Gastrocnemius medialis (tissue), 4 donors: ENCODE measurements at regions of chr7 and their contacts with region 1.

Region 1: GRCh38 chr7:121012919-121013318 is 24.4 kb downstream of the CPED1 start:
- DNase-seq: no peak
- ATAC-seq: peak; percentile 87 to 91
- H3K4me3 ChIP-seq: peak overlapping the region; percentile 21 to 34 (median 28)
- H3K27ac ChIP-seq: peak overlapping the region; percentile 86 to 98 (median 94)
- H3K4me1 ChIP-seq: peaks cover 76 to 83% of the 10 kb centered on the region in 2 donors
- H3K27me3 ChIP-seq: no peaks in the 10 kb centered on the region
- CTCF ChIP-seq: no peak
- POLR2A ChIP-seq: no peak

Region 2: GRCh38 chr7:121054925-121055324 is 42.0 kb after region 1 on chr7:
- in situ Hi-C with region 1: no loop called
- intact Hi-C with region 1: loop called (anchors 5 kb)
- DNase-seq: no peak
- ATAC-seq: no peak
- H3K4me3 ChIP-seq: no peak overlapping the region
- H3K27ac ChIP-seq: peak overlapping the region; percentile 80 to 86 (median 84)
- H3K4me1 ChIP-seq: peaks cover 64 to 79% of the 10 kb centered on the region in 2 donors
- H3K27me3 ChIP-seq: no peaks in the 10 kb centered on the region
- CTCF ChIP-seq: no peak
- POLR2A ChIP-seq: no peak

Region 3: DNA sequence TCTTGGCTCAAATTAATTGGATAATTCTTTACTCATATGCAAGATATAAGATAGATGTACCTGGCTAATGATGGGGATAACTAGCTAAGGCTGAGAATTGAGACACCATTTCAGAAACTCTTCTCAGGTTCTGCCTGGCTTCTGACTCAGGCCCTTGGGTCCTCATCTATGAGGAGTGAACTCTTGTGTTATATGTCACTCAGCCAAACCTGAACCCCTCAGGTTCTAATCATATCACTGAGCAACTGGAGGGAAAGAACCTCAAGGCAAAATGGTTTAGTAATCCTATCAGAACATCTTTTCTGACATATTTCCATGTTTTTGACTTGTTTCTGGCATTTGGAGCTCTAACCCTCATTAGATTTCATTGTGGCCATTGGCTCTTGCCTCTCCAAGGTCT is 76.0 kb after region 1 on chr7:
- in situ Hi-C with region 1: no loop called
- intact Hi-C with region 1: no loop called
- DNase-seq: no peak
- ATAC-seq: no peak
- H3K4me3 ChIP-seq: no peak overlapping the region
- H3K27ac ChIP-seq: peak overlapping the region; percentile 42 to 84 (median 54)
- H3K4me1 ChIP-seq: peaks cover 49 to 52% of the 10 kb centered on the region in 2 donors
- H3K27me3 ChIP-seq: no peaks in the 10 kb centered on the region
- CTCF ChIP-seq: no peak
- POLR2A ChIP-seq: no peak